Activated CD4-positive, alpha-beta T cell treated with anti-CD3 and anti-CD28 coated beads for 36 hours (primary cell): ENCODE measurements at regions of chr5 and their contacts with region 1.

Region 1: GRCh38 chr5:179907570-179908324 is at the start of gene TBC1D9B:
- DNase-seq: peak; percentile 82
- ATAC-seq: peak; percentile 90
- H3K4me3 Mint-ChIP-seq: peak within 1 kb of the TSS; percentile 92
- H3K27ac Mint-ChIP-seq: peak within 1 kb of the TSS; percentile 83
- H3K4me1 Mint-ChIP-seq: peaks cover 13% of the 10 kb centered on the region
- H3K27me3 Mint-ChIP-seq: no peaks in the 10 kb centered on the region
- total RNA-seq, gene TBC1D9B: 103 to 121 TPM

Region 2: GRCh38 chr5:179550511-179551230 is 357.1 kb before region 1 on chr5 and contains the start of gene RUFY1:
- CTCF ChIA-PET with region 1: no interaction called
- POLR2A ChIA-PET with region 1: no interaction called
- intact Hi-C with region 1: loop called in 1 of 2 experiments (anchors 5 kb)
- DNase-seq: peak; percentile 89
- ATAC-seq: peak; percentile 80
- H3K4me3 Mint-ChIP-seq: peak within 1 kb of the TSS; percentile 96
- H3K27ac Mint-ChIP-seq: peak within 1 kb of the TSS; percentile 99
- H3K4me1 Mint-ChIP-seq: peaks cover 37% of the 10 kb centered on the region
- H3K27me3 Mint-ChIP-seq: no peaks in the 10 kb centered on the region
- total RNA-seq, gene RUFY1: 29.6 to 33.8 TPM

Region 3: GRCh38 chr5:179732417-179732917 is 175.3 kb before region 1 on chr5 and contains the start of gene MAML1:
- CTCF ChIA-PET with region 1: no interaction called
- POLR2A ChIA-PET with region 1: no interaction called
- intact Hi-C with region 1: loop called in 1 of 2 experiments (anchors 1 kb)
- DNase-seq: peak; percentile 99
- ATAC-seq: peak; percentile 95
- H3K4me3 Mint-ChIP-seq: peak within 1 kb of the TSS; percentile 92
- H3K27ac Mint-ChIP-seq: peak within 1 kb of the TSS; percentile 94
- H3K4me1 Mint-ChIP-seq: peaks cover 43% of the 10 kb centered on the region
- H3K27me3 Mint-ChIP-seq: no peaks in the 10 kb centered on the region
- total RNA-seq, gene MAML1: 25.4 to 32.6 TPM

Region 4: GRCh38 chr5:179795863-179796833 is 111.6 kb before region 1 on chr5:
- CTCF ChIA-PET with region 1: interaction called, 4 read pairs
- POLR2A ChIA-PET with region 1: no interaction called
- intact Hi-C with region 1: loop called in 1 of 2 experiments (anchors 1 kb)
- DNase-seq: peak; percentile 87
- ATAC-seq: peak; percentile 80
- H3K4me3 Mint-ChIP-seq: peak overlapping the region; percentile 64
- H3K27ac Mint-ChIP-seq: no peak overlapping the region
- H3K4me1 Mint-ChIP-seq: peaks cover 25% of the 10 kb centered on the region
- H3K27me3 Mint-ChIP-seq: no peaks in the 10 kb centered on the region

Region 5: DNA sequence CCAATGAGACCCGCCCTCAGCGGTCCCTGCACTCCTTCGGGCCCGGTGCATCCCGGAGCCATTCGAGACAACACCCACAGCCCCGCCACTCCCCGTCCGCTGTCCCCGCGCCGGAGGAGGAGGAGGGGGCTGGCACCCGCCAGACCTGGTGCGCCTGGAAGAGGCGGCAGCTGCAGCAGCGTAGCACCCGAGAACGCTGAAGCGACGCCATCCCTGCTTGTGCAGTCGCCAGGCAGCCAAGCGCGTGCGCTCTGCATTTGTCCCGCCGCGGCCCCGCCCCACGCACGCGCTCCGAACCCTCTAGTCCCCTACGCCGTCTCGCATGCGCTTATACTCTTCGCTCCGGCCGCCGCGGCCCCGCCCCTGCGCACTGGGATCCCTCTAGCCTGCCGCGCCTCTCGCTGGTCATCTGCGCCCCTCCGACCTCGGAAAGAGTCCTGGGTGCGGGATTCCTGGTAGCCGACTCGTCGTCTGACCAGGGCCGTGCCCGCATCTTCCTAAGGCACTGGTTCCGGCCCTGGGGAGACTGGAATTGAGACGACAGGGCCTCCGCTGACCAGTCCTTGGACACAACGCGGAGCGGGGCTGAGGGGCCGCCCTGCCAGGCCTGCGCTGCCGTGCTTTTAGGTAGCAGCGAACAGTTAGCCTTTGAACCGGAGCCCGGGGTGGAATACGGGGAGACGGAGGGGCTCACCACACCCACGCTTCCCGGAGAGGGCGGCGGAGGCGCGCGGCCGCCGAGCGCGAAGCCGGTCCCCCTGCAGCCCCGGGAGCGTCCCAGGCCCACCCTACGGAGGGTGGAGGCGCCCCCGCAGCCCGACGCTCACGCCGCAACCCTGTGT is 48.9 kb before region 1 on chr5 and contains the start of gene MRNIP:
- CTCF ChIA-PET with region 1: interaction called, 3 read pairs
- POLR2A ChIA-PET with region 1: no interaction called
- intact Hi-C with region 1: loop called (anchors 1 kb)
- DNase-seq: peak; percentile 95
- ATAC-seq: peak; percentile 98
- H3K4me3 Mint-ChIP-seq: peak within 1 kb of the TSS; percentile 84
- H3K27ac Mint-ChIP-seq: peak within 1 kb of the TSS; percentile 85
- H3K4me1 Mint-ChIP-seq: peaks cover 6% of the 10 kb centered on the region
- H3K27me3 Mint-ChIP-seq: no peaks in the 10 kb centered on the region
- total RNA-seq, gene MRNIP: 19.4 to 19.7 TPM

Region 6: GRCh38 chr5:180090098-180090768 is 182.5 kb after region 1 on chr5:
- CTCF ChIA-PET with region 1: interaction called, 3 read pairs
- POLR2A ChIA-PET with region 1: no interaction called
- intact Hi-C with region 1: loop called in 1 of 2 experiments (anchors 1 kb)
- DNase-seq: peak; percentile 89
- ATAC-seq: peak; percentile 85
- H3K4me3 Mint-ChIP-seq: peak overlapping the region; percentile 74
- H3K27ac Mint-ChIP-seq: peak overlapping the region; percentile 67
- H3K4me1 Mint-ChIP-seq: peaks cover 24% of the 10 kb centered on the region
- H3K27me3 Mint-ChIP-seq: no peaks in the 10 kb centered on the region